ENCODE measurements at regions of chr1 and their contacts with region 1.

Region 1: DNA sequence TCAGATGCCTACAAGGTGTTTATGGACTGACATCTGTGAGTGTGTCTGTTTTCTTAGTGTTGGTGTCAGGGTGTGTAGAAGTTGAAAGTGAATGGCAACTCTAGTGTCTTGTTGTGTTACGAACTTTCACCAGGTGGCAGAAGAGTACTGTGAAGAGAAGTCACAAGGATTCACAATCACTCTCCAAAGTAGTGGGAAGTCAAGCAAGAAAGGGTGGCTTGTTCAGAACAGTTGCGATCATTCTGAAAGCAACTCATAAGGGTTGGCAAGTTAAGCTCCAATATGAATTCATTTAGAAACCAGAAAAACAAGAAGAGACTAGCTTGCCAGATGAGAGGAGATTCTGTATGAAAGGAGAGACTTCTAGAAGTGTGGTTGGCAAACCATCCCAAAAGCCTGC is 86.1 kb downstream of the FASLG start:
- DNase-seq: peak; percentile 10 to 21
- H3K4me3 ChIP-seq: no peak overlapping the region
- H3K4me1 ChIP-seq: no peaks in the 10 kb centered on the region
- H3K27me3 ChIP-seq: no peaks in the 10 kb centered on the region

Region 2: GRCh38 chr1:172394141-172394751 is 350.8 kb before region 1 on chr1:
- in situ Hi-C with region 1: no loop called
- DNase-seq: no peak
- H3K4me3 ChIP-seq: no peak overlapping the region
- H3K4me1 ChIP-seq: no peaks in the 10 kb centered on the region; the same call in 1 of the 2 replicates
- H3K27me3 ChIP-seq: no peaks in the 10 kb centered on the region

Region 3: DNA sequence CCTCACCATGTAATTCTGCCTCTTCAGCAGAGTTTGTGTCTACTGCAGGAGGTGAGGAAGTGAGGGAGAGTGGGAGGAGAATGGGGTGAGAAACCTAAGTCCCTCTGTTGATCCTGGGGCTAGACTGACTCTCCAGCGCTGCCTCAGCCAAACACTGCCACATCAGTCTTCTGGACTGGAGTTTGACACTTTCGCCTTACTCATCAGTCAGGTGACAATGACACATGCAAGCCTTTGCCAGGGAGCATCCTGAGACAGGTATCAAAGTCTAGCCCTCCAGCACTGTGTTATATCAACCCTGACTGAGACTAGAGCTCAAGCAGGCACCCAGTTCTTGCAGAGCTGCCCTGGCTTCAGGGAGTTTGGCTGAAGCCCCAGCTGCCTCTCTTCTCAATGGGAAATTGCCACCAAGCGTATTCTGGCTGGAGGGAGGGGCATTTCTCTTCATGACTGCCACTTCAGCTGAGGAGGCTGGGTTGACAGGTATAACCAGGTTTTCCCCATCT is 245.3 kb before region 1 on chr1:
- in situ Hi-C with region 1: no loop called
- DNase-seq: no peak
- H3K4me3 ChIP-seq: no peak overlapping the region
- H3K4me1 ChIP-seq: peaks cover 11% of the 10 kb centered on the region
- H3K27me3 ChIP-seq: peaks cover 3% of the 10 kb centered on the region; the same call in 1 of the 2 replicates

Region 4: DNA sequence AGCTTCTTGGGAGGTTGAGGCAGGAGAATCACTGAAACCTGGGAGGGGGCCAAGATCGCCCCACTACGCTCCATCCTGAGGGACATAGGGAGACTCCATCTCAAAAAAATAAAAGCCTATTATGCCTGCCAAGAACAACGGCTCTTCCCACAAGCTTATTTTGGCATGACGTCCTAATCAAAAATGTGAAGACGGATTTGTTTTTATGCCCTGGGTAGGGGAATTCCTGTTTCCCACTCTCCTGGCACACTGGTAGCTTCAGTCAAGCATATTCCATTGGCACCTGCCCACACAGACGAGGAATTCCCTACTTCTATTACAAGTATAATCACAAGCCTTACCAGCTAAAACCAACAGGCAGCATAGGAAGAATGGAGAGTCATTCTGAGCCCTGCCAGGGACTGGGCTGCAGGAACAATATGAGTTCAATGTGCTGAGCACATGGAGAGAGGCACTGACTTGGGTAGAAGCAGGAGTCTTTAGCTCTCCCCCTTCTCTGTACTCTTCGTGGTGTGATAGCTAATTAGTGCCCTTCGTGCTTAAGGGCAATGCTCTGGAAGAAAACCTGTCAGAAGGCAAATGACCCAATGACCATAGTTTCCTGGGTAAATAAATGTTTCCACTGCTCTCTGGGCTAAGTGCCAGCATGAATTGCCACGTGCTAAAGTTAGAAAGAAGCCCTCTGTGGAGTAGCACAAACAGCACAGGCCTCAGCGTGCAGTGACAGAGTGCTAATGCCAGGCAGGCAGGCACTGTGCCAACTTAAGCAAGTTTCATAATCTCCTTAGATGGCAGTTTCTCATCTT is 445.3 kb after region 1 on chr1:
- in situ Hi-C with region 1: loop called (anchors 10 kb)
- DNase-seq: no peak
- H3K4me3 ChIP-seq: no peak overlapping the region
- H3K4me1 ChIP-seq: no peaks in the 10 kb centered on the region
- H3K27me3 ChIP-seq: no peaks in the 10 kb centered on the region

Region 5: DNA sequence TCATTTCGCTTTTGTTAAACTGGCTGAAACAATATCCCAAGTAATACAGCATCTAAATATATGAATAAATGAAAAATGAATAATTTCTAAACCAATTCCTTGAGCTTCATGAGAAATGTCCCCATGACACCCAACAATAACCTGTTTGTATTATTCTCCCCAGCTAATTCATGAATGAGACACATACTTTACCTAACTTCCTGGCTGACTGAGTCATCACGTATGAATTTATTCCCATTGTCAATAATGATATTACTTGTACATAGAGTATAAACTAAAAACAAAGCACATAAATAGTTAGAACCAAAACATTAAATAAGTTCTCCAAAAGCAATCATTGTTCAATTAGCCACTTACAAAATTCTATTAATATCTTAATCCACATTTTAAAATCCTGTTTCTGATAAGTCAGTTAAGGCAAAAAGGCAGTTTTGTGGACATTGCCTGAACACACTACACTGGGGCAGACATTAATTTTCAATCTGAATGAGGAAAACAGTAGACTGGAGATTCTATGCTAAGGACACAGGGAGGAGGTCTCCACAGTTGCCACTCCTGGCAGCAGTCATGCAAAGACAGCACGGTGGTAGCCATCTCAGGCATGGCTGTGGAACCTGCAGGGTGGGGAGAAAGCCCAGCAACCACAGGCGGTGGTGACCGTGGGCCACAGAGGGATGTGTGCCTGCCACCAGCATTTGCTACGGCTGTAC is 809.7 kb after region 1 on chr1:
- in situ Hi-C with region 1: no loop called
- DNase-seq: no peak
- H3K4me3 ChIP-seq: no peak overlapping the region
- H3K4me1 ChIP-seq: no peaks in the 10 kb centered on the region
- H3K27me3 ChIP-seq: no peaks in the 10 kb centered on the region

Region 6: DNA sequence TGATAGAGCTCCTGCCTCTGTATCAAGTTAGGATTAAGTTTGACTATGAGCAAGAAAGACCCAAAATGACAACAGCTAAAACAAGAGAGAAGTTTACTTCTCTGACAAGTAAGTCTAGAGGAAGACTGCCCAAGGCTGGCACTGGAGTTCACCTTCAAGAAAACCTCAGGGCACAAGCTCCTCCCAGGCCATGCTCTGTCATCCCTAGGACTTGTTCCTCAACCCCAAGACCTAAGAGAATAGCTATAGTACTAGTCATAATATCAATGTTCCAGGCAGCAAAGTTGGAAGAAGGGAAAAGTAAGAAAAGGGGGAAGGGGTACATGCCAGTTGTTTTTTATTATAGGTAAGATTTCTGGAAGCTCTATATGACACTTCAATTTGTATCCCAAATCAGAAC is 1053.1 kb after region 1 on chr1:
- in situ Hi-C with region 1: loop called (anchors 25 kb)
- DNase-seq: no peak
- H3K4me3 ChIP-seq: no peak overlapping the region
- H3K4me1 ChIP-seq: no peaks in the 10 kb centered on the region
- H3K27me3 ChIP-seq: no peaks in the 10 kb centered on the region